ENCODE measurements at regions of chr18 and their contacts with region 1.

Region 1: GRCh38 chr18:20996418-20996817 is 115.2 kb downstream of the ROCK1 start:
- DNase-seq: no peak
- H3K4me3 ChIP-seq: no peak overlapping the region
- H3K4me1 ChIP-seq: no peaks in the 10 kb centered on the region
- H3K27me3 ChIP-seq: no peaks in the 10 kb centered on the region

Region 2: DNA sequence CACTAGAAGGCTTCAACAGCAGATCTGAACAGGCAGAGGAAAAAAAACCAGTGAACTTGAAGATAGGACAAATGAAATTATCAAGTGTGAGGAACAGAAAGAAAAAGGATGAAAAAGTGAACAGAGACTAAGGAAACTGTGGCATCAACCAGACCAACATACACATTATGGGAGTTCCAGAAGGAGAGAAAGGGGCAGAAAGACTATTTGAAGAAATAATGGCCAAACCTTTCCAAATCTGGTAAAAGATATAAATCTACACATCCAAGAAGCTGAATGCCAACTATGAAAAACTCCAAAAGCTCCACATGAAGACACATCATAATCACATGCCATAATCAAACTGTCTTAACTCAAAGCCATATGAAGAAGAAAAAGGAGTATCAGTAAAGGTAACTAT is 35.4 kb after region 1 on chr18:
- in situ Hi-C with region 1: loop called (anchors 5 kb)
- DNase-seq: no peak
- H3K4me3 ChIP-seq: no peak overlapping the region
- H3K4me1 ChIP-seq: no peaks in the 10 kb centered on the region
- H3K27me3 ChIP-seq: no peaks in the 10 kb centered on the region